Naive thymus-derived CD4-positive, alpha-beta T cell (primary cell): ENCODE measurements at regions of chr1 and their contacts with region 1.

Region 1: GRCh38 chr1:246566128-246566812 is at the starts of genes CNST and TFB2M:
- DNase-seq: peak; percentile 75 to 95 (median 89)
- ATAC-seq: peak; percentile 85
- H3K4me3 ChIP-seq: peak within 1 kb of the TSS; percentile 84
- H3K4me3 Mint-ChIP-seq: peak within 1 kb of the TSS; percentile 93 to 99 (median 98)
- H3K27ac ChIP-seq: peak within 1 kb of the TSS; percentile 89
- H3K27ac Mint-ChIP-seq: peak within 1 kb of the TSS; percentile 90 to 99 (median 96)
- H3K4me1 ChIP-seq: peaks cover 33 to 46% of the 10 kb centered on the region in 2 donors
- H3K4me1 Mint-ChIP-seq: peaks cover 35 to 61% (median 45%) of the 10 kb centered on the region in 7 donors
- H3K27me3 ChIP-seq: no peaks in the 10 kb centered on the region
- H3K27me3 Mint-ChIP-seq: no peaks in the 10 kb centered on the region
- total RNA-seq, gene CNST: 30.5 to 111 (median 80.2) TPM
- total RNA-seq, gene TFB2M: 9.5 to 12.2 (median 10.3) TPM

Region 2: DNA sequence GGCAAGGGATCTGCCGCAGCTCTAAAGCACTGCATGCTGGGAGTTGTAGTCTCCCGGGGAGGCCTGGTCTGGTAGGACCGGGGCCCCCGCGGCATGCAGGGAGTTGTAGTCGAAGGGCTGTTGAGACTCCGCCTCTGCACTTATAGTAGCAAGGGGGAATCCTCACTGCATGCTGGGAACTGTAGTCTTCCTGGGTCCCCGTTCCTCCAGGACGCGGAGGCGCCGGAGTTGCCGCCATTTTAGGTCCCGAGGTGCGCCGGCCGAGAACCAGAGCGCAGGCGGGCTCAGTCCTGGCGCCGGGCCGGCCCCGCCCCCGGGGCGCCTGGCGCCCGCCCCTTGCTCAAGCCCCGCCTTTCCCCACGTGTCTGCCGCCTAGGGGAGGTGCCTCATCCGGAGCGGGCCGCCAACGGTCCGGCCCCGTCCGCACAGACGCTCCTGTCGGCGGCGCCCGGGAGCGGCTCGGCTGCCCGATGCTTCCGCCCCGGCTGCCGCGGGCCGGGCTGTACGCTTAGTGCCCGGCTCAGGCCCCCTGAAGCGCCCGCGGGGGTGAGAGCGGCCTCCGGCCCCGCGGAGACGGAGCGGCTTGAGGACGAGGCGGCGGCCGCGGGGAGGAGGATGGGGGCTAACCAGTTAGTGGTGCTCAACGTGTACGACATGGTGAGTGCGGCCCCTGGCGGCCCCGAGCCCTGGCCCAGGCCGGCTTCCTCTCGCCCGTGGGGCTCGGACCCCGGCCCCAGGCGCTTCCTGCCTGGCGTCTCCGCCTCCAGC is 1913.4 kb before region 1 on chr1 and contains the start of gene DESI2:
- CTCF ChIA-PET with region 1: no interaction called
- POLR2A ChIA-PET with region 1: no interaction called
- intact Hi-C with region 1: loop called in 1 of 2 experiments (anchors 1 kb)
- DNase-seq: peak; percentile 95 to 100 (median 98)
- ATAC-seq: peak; percentile 95
- H3K4me3 ChIP-seq: peak within 1 kb of the TSS; percentile 75
- H3K4me3 Mint-ChIP-seq: peak within 1 kb of the TSS in 9 of 10 donors; percentile 83 to 91 (median 88)
- H3K27ac ChIP-seq: peak within 1 kb of the TSS; percentile 87
- H3K27ac Mint-ChIP-seq: peak within 1 kb of the TSS; percentile 81 to 96 (median 90)
- H3K4me1 ChIP-seq: peaks cover 19 to 24% of the 10 kb centered on the region in 2 donors
- H3K4me1 Mint-ChIP-seq: peaks cover 19 to 33% (median 21%) of the 10 kb centered on the region in 7 donors
- H3K27me3 ChIP-seq: no peaks in the 10 kb centered on the region
- H3K27me3 Mint-ChIP-seq: no peaks in the 10 kb centered on the region
- total RNA-seq, gene DESI2: 13.0 to 23.4 (median 17.6) TPM

Region 3: DNA sequence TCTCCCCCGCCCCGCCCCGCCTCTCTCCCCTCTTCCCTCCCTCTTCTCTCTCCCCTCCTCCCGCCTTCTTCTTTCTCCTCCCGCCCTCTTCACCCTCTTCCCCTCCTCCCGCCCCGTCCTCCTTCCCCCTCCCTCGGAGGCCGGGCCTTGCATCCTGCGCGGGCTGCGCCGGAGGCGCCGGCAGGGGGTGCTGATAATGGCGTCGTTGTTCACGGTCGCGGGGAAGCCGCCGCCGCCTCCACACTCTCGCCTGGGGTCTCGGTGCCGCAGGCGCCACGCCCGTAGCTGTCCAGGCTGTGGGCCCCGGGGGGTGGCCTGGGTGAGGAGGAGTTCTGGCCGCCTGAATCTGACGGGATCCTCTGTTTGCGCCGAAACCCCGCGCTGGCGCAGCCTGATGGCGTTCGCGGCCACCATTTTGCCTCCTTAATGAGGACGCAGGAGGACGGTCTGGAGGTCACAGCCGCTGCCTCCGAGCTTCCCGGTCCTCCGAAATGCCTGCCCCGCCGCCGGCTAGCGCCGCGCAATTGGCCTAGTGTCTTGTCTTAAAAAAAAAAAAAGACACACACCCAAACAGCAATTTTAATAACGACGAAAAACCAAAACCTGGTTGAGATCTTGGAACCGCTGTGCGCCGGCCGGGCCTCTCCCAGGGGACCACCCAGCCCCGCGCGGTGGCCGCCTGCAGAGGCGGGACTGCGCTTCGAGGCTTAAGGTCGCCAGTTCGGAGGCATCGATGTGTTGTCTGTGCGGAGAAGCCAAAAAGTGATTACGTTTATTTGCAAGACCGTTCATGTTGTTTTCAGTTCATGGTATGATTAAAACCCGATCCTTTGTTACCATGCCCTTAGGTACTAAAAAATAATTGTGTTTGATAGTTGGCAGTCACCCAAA is 1595.4 kb before region 1 on chr1:
- CTCF ChIA-PET with region 1: no interaction called
- POLR2A ChIA-PET with region 1: no interaction called
- intact Hi-C with region 1: loop called in 1 of 2 experiments (anchors 2 kb)
- DNase-seq: peak; percentile 91 to 97 (median 95)
- ATAC-seq: peak; percentile 88
- H3K4me3 ChIP-seq: peak overlapping the region; percentile 81
- H3K4me3 Mint-ChIP-seq: peak overlapping the region; percentile 91 to 95 (median 93)
- H3K27ac ChIP-seq: peak overlapping the region; percentile 99
- H3K27ac Mint-ChIP-seq: peak overlapping the region; percentile 97 to 100 (median 99)
- H3K4me1 ChIP-seq: peaks cover 5 to 12% of the 10 kb centered on the region in 2 donors
- H3K4me1 Mint-ChIP-seq: peaks cover 7 to 31% (median 25%) of the 10 kb centered on the region in 7 donors
- H3K27me3 ChIP-seq: no peaks in the 10 kb centered on the region
- H3K27me3 Mint-ChIP-seq: peaks cover 0 to 14% (median 0%) of the 10 kb centered on the region in 5 donors

Region 4: GRCh38 chr1:246506674-246507481 is 59.4 kb before region 1 on chr1 and contains the start of gene SMYD3:
- CTCF ChIA-PET with region 1: interaction called, 3 read pairs
- POLR2A ChIA-PET with region 1: interaction called, 5 read pairs
- intact Hi-C with region 1: loop called (anchors 1 kb)
- DNase-seq: peak; percentile 70 to 81 (median 75)
- ATAC-seq: peak; percentile 93
- H3K4me3 ChIP-seq: peak within 1 kb of the TSS; percentile 78
- H3K4me3 Mint-ChIP-seq: peak within 1 kb of the TSS; percentile 88 to 96 (median 93)
- H3K27ac ChIP-seq: peak within 1 kb of the TSS; percentile 75
- H3K27ac Mint-ChIP-seq: peak within 1 kb of the TSS; percentile 78 to 95 (median 91)
- H3K4me1 ChIP-seq: peaks cover 4 to 6% of the 10 kb centered on the region in 2 donors
- H3K4me1 Mint-ChIP-seq: peaks cover 19 to 41% (median 30%) of the 10 kb centered on the region in 7 donors
- H3K27me3 ChIP-seq: no peaks in the 10 kb centered on the region
- H3K27me3 Mint-ChIP-seq: no peaks in the 10 kb centered on the region
- total RNA-seq, gene SMYD3: 19.5 to 28.6 (median 24.2) TPM

Region 5: DNA sequence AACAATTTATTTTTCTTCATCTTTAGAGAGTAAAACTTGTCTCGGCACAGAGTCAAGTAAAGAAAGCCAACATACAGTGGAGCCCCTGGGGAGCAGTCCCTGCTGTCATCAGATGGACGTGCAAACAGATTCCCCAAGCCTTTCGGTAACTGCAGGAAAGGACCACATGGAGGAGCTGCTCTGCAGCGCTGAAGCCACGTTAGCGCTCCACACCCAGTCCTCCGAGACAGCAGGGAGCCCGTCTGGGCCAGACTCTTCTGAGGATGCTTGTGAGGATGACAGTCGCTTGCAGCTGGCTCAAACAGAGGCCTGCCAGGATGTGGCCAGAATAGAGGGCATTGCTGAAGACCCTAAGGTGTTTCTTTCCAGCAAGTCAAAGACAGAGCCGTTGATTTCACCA is 80.8 kb after region 1 on chr1:
- CTCF ChIA-PET with region 1: interaction called, 5 read pairs
- POLR2A ChIA-PET with region 1: interaction called, 3 read pairs
- intact Hi-C with region 1: loop called in 1 of 2 experiments (anchors 1 kb)
- DNase-seq: no peak
- ATAC-seq: no peak
- H3K4me3 ChIP-seq: no peak overlapping the region
- H3K4me3 Mint-ChIP-seq: no peak overlapping the region
- H3K27ac ChIP-seq: no peak overlapping the region
- H3K27ac Mint-ChIP-seq: no peak overlapping the region
- H3K4me1 ChIP-seq: no peaks in the 10 kb centered on the region
- H3K4me1 Mint-ChIP-seq: peaks cover 5 to 41% (median 21%) of the 10 kb centered on the region in 7 donors
- H3K27me3 ChIP-seq: no peaks in the 10 kb centered on the region
- H3K27me3 Mint-ChIP-seq: no peaks in the 10 kb centered on the region

Region 6: GRCh38 chr1:246753670-246754535 is 187.6 kb after region 1 on chr1:
- CTCF ChIA-PET with region 1: no interaction called
- POLR2A ChIA-PET with region 1: no interaction called
- intact Hi-C with region 1: loop called in 1 of 2 experiments (anchors 10 kb)
- DNase-seq: peak; percentile 20 to 55 (median 44)
- ATAC-seq: peak; percentile 81
- H3K4me3 ChIP-seq: no peak overlapping the region
- H3K4me3 Mint-ChIP-seq: no peak overlapping the region
- H3K27ac ChIP-seq: no peak overlapping the region
- H3K27ac Mint-ChIP-seq: no peak overlapping the region
- H3K4me1 ChIP-seq: no peaks in the 10 kb centered on the region
- H3K4me1 Mint-ChIP-seq: no peaks in the 10 kb centered on the region
- H3K27me3 ChIP-seq: no peaks in the 10 kb centered on the region
- H3K27me3 Mint-ChIP-seq: no peaks in the 10 kb centered on the region

Region 7: DNA sequence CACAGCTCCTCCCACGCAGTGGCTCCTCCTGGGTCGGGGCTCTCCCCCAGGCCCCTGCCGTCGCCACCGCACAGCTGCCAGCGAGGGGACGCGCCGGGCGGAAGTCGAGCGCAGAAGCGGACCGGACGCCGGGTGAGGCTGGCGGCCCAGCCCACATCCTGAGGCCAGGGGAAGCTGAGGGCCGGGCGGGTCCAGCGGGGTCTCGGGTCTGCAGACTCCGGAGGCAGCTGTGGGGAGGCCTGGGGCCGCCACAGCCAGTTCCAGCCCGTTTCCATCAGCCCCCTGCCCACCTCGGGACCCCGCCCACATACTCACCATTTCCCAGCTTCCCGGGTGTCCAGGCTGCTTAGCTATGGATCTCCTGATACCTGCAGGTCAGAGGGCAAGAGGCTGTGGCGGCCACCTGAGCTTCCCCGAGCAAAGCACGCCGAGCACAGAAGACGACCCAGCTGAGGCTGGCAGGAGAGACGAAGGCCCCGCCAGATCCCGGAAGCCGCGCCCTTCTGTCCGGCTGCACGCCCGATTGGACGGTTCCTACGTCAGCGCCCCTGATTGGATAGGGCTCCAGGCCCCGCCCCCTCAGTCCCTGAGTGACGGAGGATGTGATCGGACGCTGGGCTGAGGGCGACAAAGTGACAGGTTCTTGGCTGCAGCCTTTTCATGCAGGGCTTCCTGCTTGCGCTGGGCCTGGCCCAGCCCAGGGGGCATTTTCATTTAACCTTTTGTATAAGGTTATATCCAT is 644.3 kb after region 1 on chr1:
- CTCF ChIA-PET with region 1: no interaction called
- POLR2A ChIA-PET with region 1: interaction called, 3 read pairs
- intact Hi-C with region 1: loop called in 1 of 2 experiments (anchors 1 kb)
- DNase-seq: peak; percentile 88 to 95 (median 91)
- ATAC-seq: peak; percentile 99
- H3K4me3 ChIP-seq: peak overlapping the region; percentile 77
- H3K4me3 Mint-ChIP-seq: peak overlapping the region; percentile 88 to 97 (median 95)
- H3K27ac ChIP-seq: peak overlapping the region; percentile 83
- H3K27ac Mint-ChIP-seq: peak overlapping the region; percentile 92 to 97 (median 94)
- H3K4me1 ChIP-seq: peaks cover 12 to 13% of the 10 kb centered on the region in 2 donors
- H3K4me1 Mint-ChIP-seq: peaks cover 21 to 84% (median 71%) of the 10 kb centered on the region in 7 donors
- H3K27me3 ChIP-seq: no peaks in the 10 kb centered on the region
- H3K27me3 Mint-ChIP-seq: peaks cover 0 to 3% (median 0%) of the 10 kb centered on the region in 5 donors

Region 8: GRCh38 chr1:247373721-247374141 is 807.5 kb after region 1 on chr1:
- CTCF ChIA-PET with region 1: no interaction called
- POLR2A ChIA-PET with region 1: no interaction called
- intact Hi-C with region 1: no loop called
- DNase-seq: peak; percentile 37 to 64 (median 48)
- ATAC-seq: peak; percentile 84
- H3K4me3 ChIP-seq: peak overlapping the region; percentile 46
- H3K4me3 Mint-ChIP-seq: peak overlapping the region in 9 of 10 donors; percentile 14 to 70 (median 58)
- H3K27ac ChIP-seq: no peak overlapping the region
- H3K27ac Mint-ChIP-seq: no peak overlapping the region
- H3K4me1 ChIP-seq: no peaks in the 10 kb centered on the region
- H3K4me1 Mint-ChIP-seq: peaks cover 0 to 10% (median 7%) of the 10 kb centered on the region in 7 donors
- H3K27me3 ChIP-seq: no peaks in the 10 kb centered on the region
- H3K27me3 Mint-ChIP-seq: peaks cover 4 to 19% (median 6%) of the 10 kb centered on the region in 5 donors